ENCODE measurements at regions of chr16 and their contacts with region 1.

Region 1: DNA sequence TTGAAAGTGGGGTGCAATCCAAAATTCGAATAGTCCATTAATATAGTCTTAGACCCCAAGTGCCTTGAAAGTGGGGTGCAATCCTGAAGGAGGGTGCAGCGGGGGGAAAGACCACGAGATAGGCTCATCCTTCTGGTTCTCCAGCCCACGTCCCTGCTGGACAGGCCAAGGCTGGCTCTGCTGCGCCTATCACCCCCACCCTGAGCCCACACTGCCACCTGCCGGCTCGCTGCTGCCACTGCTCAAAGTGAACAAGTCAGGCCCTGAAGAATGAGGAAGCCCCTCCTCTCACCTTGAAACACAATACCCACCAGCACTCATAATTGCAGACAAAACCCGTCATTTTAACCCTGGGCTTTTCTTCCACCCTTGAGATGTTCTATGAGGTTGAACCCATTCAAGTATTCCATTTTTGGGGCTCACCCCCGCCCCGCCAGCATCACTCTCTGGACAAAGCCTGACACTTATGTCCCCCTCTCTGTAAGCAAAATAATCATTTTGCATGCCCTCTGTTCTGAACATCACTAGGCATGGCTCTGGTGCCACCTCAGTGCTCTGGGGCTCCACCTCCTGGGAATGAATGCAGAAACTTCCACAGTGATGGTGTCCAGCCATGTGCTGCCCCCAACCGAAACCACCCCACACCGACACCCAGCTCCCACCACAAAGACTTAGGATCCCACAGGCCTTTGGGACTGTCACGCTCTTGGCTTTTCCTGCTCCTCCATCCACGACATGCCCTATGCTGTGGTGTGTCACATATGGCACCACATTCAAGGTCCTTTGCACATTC is 56.8 kb downstream of the BEAN1 start:
- DNase-seq: peak; percentile 50 to 82 (median 76)
- ATAC-seq: peak; percentile 83
- H3K4me3 ChIP-seq: no peak overlapping the region
- H3K4me3 Mint-ChIP-seq: no peak overlapping the region
- H3K27ac ChIP-seq: no peak overlapping the region
- H3K27ac Mint-ChIP-seq: no peak overlapping the region
- H3K4me1 ChIP-seq: peaks cover 5% of the 10 kb centered on the region
- H3K4me1 Mint-ChIP-seq: peaks cover 16% of the 10 kb centered on the region
- H3K27me3 ChIP-seq: no peaks in the 10 kb centered on the region
- H3K27me3 Mint-ChIP-seq: no peaks in the 10 kb centered on the region
- CTCF ChIP-seq: peak; percentile 92

Region 2: GRCh38 chr16:66357153-66357928 is 126.5 kb before region 1 on chr16:
- CTCF ChIA-PET with region 1: no interaction called
- POLR2A ChIA-PET with region 1: no interaction called
- intact Hi-C with region 1: loop called in 1 of 2 experiments (anchors 1 kb)
- DNase-seq: peak in 3 of 9 experiments; percentile 11 to 51 (median 40)
- ATAC-seq: no peak
- H3K4me3 ChIP-seq: no peak overlapping the region
- H3K4me3 Mint-ChIP-seq: no peak overlapping the region
- H3K27ac ChIP-seq: no peak overlapping the region
- H3K27ac Mint-ChIP-seq: no peak overlapping the region
- H3K4me1 ChIP-seq: no peaks in the 10 kb centered on the region
- H3K4me1 Mint-ChIP-seq: peaks cover 3% of the 10 kb centered on the region
- H3K27me3 ChIP-seq: peaks cover 0 to 3% of the 10 kb centered on the region in 2 experiments
- H3K27me3 Mint-ChIP-seq: peaks cover 50% of the 10 kb centered on the region
- CTCF ChIP-seq: peak; percentile 50

Region 3: DNA sequence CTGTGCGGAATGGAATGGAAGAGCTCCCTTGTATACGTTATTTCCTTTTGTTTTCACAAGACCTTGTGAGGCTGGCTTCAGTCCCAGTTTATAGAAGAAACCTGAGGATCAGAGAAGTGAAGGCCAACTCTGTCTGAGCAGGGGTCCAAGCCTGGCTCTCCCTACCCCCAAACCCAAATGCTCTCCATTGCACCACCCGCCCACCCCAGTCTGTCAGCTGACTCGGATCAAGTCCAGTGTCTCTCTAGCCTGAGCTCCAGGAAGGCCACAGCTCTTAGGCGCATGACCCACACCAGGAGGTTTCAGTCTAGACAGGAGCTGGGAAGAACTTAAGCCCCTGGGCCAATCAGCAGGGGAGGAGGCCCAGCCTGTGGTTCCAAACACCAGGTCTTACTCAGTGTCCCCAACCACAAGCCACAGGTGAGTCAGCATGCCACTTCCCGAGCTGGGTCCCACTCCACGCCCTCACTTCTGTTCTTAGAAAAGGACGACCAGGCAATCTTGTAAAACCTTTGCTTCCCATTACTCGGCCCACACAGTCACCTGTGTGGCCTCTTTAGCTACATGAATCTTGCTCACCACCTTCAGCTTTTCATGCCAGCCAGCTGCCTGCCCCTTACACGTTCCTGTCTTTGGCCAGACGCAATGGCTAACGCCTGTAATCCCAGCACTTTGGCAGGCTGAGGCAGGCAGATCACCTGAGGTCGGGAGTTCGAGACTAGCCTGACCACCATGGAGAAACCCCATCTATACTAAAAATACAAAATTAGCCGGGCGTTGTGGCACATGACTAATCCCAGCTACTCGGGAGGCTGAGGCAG is 38.3 kb after region 1 on chr16:
- CTCF ChIA-PET with region 1: interaction called, 4 read pairs
- POLR2A ChIA-PET with region 1: no interaction called
- intact Hi-C with region 1: loop called in 1 of 2 experiments (anchors 2 kb)
- DNase-seq: peak; percentile 17 to 91 (median 85)
- ATAC-seq: peak; percentile 82
- H3K4me3 ChIP-seq: peak overlapping the region in 1 of 2 experiments; percentile 21
- H3K4me3 Mint-ChIP-seq: peak overlapping the region; percentile 66
- H3K27ac ChIP-seq: peak overlapping the region in 1 of 2 experiments; percentile 58
- H3K27ac Mint-ChIP-seq: peak overlapping the region; percentile 95
- H3K4me1 ChIP-seq: peaks cover 72% of the 10 kb centered on the region
- H3K4me1 Mint-ChIP-seq: peaks cover 80% of the 10 kb centered on the region
- H3K27me3 ChIP-seq: no peaks in the 10 kb centered on the region
- H3K27me3 Mint-ChIP-seq: no peaks in the 10 kb centered on the region
- CTCF ChIP-seq: no peak

Region 4: DNA sequence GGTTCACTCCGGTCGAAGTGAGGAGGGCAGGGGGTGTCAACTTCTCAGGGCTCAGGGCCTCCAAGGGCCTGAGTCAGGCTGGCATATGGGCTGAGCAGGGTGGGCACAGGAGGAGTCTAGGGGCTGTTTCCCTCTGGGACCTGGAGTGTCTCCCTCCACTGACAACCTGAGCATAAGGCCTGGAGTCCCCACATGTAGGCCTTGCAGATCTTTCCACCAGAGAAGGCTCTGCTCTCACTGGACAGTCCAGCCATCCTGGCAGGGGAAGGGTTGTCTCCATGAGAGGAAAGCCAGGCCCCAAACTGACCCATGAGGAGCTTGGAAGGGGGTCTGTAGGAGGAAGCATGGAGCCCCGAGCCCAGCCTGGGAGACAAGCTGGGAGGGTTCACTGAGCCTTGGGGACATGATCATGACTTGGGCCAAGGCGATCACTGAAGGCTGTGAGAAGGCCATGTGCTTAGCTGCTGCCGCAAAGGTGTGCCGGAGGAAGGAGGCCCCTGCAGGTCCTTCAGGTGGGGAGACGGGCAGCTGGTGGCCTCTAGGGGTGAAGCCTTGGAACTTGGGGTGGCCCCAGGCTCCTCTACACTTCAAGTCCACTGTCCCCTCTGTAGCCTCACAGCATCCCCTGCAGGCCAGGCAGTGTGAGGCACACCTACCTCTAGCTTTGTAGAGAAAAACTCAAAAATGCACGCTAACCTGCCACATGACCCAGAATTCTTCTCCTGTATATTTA is 105.3 kb after region 1 on chr16:
- CTCF ChIA-PET with region 1: interaction called, 13 read pairs
- POLR2A ChIA-PET with region 1: no interaction called
- intact Hi-C with region 1: no loop called
- DNase-seq: peak; percentile 45 to 85 (median 70)
- ATAC-seq: peak; percentile 94
- H3K4me3 ChIP-seq: no peak overlapping the region
- H3K4me3 Mint-ChIP-seq: peak overlapping the region; percentile 83
- H3K27ac ChIP-seq: no peak overlapping the region
- H3K27ac Mint-ChIP-seq: peak overlapping the region; percentile 49
- H3K4me1 ChIP-seq: peaks cover 25% of the 10 kb centered on the region
- H3K4me1 Mint-ChIP-seq: peaks cover 24% of the 10 kb centered on the region
- H3K27me3 ChIP-seq: no peaks in the 10 kb centered on the region
- H3K27me3 Mint-ChIP-seq: no peaks in the 10 kb centered on the region
- CTCF ChIP-seq: peak; percentile 71

Measured in CD8-positive, alpha-beta T cell (primary cell).